A673 (cell line): ENCODE measurements at regions of chr7 and their contacts with region 1.

Region 1: DNA sequence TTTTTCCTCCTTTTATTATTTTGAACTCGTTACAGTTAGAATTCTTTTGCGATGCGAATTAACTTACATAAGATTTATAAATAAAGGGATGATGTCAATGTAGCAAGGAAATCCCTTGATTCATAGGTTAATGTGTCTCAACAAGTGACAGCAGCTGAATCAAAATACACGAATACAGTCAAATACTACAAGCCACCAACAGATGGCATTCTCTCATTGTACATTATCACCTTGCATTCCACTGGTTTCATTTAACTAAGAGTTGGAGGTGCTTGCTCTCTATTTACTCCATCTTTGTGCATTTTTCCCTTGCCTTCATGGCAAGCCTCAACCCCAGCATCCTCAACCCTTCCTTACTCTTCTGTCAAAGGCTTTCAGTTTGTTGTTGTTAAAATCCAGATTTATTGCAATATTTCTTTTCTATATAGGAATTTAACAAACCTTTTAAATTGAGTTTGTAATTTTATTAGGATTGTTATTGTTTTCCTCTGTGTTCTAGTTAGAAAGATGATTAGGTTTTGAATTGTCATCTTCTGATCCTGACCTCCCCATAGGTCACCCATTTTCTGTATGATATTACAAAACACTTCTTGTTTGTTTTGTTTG is 78.3 kb downstream of the SLC25A40 start:
- DNase-seq: peak; percentile 63
- H3K4me3 ChIP-seq: no peak overlapping the region
- H3K27ac ChIP-seq: no peak overlapping the region
- H3K4me1 ChIP-seq: no peaks in the 10 kb centered on the region
- H3K27me3 ChIP-seq: no peaks in the 10 kb centered on the region
- CTCF ChIP-seq: peak; percentile 70

Region 2: DNA sequence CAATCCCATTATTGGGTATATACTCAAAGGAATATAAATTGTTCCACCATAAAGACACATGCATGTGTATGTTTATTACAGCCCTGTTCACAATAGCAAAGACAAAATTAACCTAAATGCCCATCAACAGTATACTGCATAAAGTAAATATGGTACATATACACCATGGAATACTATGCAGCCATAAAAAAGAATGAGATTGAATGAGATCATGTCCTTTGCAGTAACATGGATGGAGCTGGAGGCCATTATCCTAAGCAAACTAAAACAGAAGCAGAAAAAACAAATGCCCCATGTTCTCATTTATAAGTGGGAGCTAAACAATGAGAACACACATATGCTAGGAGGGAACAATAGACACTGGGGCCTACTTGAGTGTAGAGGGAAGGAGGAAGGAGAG is 497.1 kb before region 1 on chr7:
- CTCF ChIA-PET with region 1: no interaction called
- POLR2A ChIA-PET with region 1: no interaction called
- intact Hi-C with region 1: no loop called
- DNase-seq: no peak
- H3K4me3 ChIP-seq: no peak overlapping the region
- H3K27ac ChIP-seq: no peak overlapping the region
- H3K4me1 ChIP-seq: no peaks in the 10 kb centered on the region
- H3K27me3 ChIP-seq: no peaks in the 10 kb centered on the region
- CTCF ChIP-seq: no peak

Region 3: GRCh38 chr7:87543623-87544022 is 254.3 kb before region 1 on chr7:
- CTCF ChIA-PET with region 1: no interaction called
- POLR2A ChIA-PET with region 1: no interaction called
- intact Hi-C with region 1: no loop called
- DNase-seq: no peak
- H3K4me3 ChIP-seq: no peak overlapping the region
- H3K27ac ChIP-seq: no peak overlapping the region
- H3K4me1 ChIP-seq: no peaks in the 10 kb centered on the region
- H3K27me3 ChIP-seq: no peaks in the 10 kb centered on the region
- CTCF ChIP-seq: no peak

Region 4: DNA sequence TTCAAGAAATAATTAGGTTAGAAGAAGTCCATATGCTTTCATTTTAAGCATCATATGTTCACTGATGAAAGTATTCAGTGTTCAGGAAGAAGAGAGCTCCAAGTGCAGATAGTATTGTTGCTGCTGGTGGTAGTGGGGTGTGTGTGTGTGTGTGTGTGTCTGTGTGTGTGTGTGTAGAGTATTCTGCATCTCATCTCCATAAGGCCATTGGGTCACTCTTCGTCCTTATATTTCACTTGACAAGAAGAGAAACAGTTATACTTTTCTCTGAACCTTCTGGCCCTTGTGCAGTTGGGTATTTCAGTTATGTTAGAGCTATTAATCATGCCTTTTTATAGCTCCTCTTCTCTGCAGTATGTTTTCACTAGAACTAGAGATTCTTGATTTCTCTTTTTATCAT is 162.3 kb after region 1 on chr7:
- CTCF ChIA-PET with region 1: no interaction called
- POLR2A ChIA-PET with region 1: no interaction called
- intact Hi-C with region 1: no loop called
- DNase-seq: no peak
- H3K4me3 ChIP-seq: no peak overlapping the region
- H3K27ac ChIP-seq: no peak overlapping the region
- H3K4me1 ChIP-seq: peaks cover 4% of the 10 kb centered on the region
- H3K27me3 ChIP-seq: no peaks in the 10 kb centered on the region
- CTCF ChIP-seq: no peak

Region 5: GRCh38 chr7:88111136-88111743 is 313.3 kb after region 1 on chr7:
- CTCF ChIA-PET with region 1: no interaction called
- POLR2A ChIA-PET with region 1: no interaction called
- intact Hi-C with region 1: loop called (anchors 1 kb)
- DNase-seq: peak; percentile 57
- H3K4me3 ChIP-seq: no peak overlapping the region
- H3K27ac ChIP-seq: no peak overlapping the region
- H3K4me1 ChIP-seq: peaks cover under 1% of the 10 kb centered on the region
- H3K27me3 ChIP-seq: no peaks in the 10 kb centered on the region
- CTCF ChIP-seq: peak; percentile 71

Region 6: GRCh38 chr7:88169717-88170320 is 371.9 kb after region 1 on chr7:
- CTCF ChIA-PET with region 1: no interaction called
- POLR2A ChIA-PET with region 1: no interaction called
- intact Hi-C with region 1: loop called (anchors 5 kb)
- DNase-seq: peak; percentile 19
- H3K4me3 ChIP-seq: no peak overlapping the region
- H3K27ac ChIP-seq: no peak overlapping the region
- H3K4me1 ChIP-seq: no peaks in the 10 kb centered on the region
- H3K27me3 ChIP-seq: no peaks in the 10 kb centered on the region
- CTCF ChIP-seq: peak; percentile 70